Activated CD4-positive, alpha-beta T cell treated with anti-CD3 and anti-CD28 coated beads for 36 hours (primary cell): ENCODE measurements at regions of chr14 and their contacts with region 1.

Region 1: GRCh38 chr14:67359775-67360648 is at the starts of genes ATP6V1D and EIF2S1:
- DNase-seq: peak; percentile 100
- ATAC-seq: peak; percentile 95
- H3K4me3 Mint-ChIP-seq: peak within 1 kb of the TSS; percentile 98
- H3K27ac Mint-ChIP-seq: peak within 1 kb of the TSS; percentile 98
- H3K4me1 Mint-ChIP-seq: peaks cover 59% of the 10 kb centered on the region
- H3K27me3 Mint-ChIP-seq: no peaks in the 10 kb centered on the region
- total RNA-seq, gene ATP6V1D: 23.3 to 26.7 TPM
- total RNA-seq, gene EIF2S1: 212 to 233 TPM

Region 2: GRCh38 chr14:66495218-66496098 is 864.6 kb before region 1 on chr14:
- CTCF ChIA-PET with region 1: no interaction called
- POLR2A ChIA-PET with region 1: no interaction called
- intact Hi-C with region 1: loop called in 1 of 2 experiments (anchors 2 kb)
- DNase-seq: peak; percentile 52
- ATAC-seq: peak; percentile 83
- H3K4me3 Mint-ChIP-seq: no peak overlapping the region
- H3K27ac Mint-ChIP-seq: no peak overlapping the region
- H3K4me1 Mint-ChIP-seq: peaks cover 19% of the 10 kb centered on the region
- H3K27me3 Mint-ChIP-seq: no peaks in the 10 kb centered on the region

Region 3: DNA sequence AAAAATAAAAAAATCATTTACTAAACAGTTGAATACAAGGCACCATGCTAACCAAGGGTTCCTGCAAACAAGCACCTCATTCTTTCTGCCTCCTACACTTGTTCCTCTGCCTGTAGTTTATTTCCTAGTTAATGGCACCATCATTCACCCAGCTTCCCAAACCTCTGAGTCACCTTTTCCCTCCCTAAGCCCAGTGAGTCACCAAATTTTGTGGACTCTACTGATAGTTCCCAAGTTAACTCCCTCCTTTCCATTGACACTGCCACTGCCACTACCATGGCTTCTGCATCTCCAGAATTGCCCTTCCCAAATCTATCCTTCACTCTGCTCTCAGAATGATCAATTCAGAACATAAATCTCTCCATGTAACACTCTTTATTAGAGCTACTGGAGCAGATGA is 172.8 kb before region 1 on chr14:
- CTCF ChIA-PET with region 1: no interaction called
- POLR2A ChIA-PET with region 1: no interaction called
- intact Hi-C with region 1: loop called in 1 of 2 experiments (anchors 5 kb)
- DNase-seq: no peak
- ATAC-seq: no peak
- H3K4me3 Mint-ChIP-seq: no peak overlapping the region
- H3K27ac Mint-ChIP-seq: no peak overlapping the region
- H3K4me1 Mint-ChIP-seq: peaks cover 20% of the 10 kb centered on the region
- H3K27me3 Mint-ChIP-seq: no peaks in the 10 kb centered on the region

Region 4: GRCh38 chr14:67373347-67373746 is 13.3 kb after region 1 on chr14:
- CTCF ChIA-PET with region 1: interaction called, 19 read pairs
- POLR2A ChIA-PET with region 1: no interaction called
- intact Hi-C with region 1: loop called in 1 of 2 experiments (anchors 1 kb)
- DNase-seq: peak; percentile 34
- ATAC-seq: peak; percentile 94
- H3K4me3 Mint-ChIP-seq: no peak overlapping the region
- H3K27ac Mint-ChIP-seq: peak overlapping the region; percentile 88
- H3K4me1 Mint-ChIP-seq: peaks cover 53% of the 10 kb centered on the region
- H3K27me3 Mint-ChIP-seq: no peaks in the 10 kb centered on the region

Region 5: GRCh38 chr14:67619446-67620216 is 259.6 kb after region 1 on chr14 and contains the start of gene ARG2:
- CTCF ChIA-PET with region 1: interaction called, 3 read pairs
- POLR2A ChIA-PET with region 1: no interaction called
- intact Hi-C with region 1: loop called in 1 of 2 experiments (anchors 1 kb)
- DNase-seq: peak; percentile 99
- ATAC-seq: peak; percentile 88
- H3K4me3 Mint-ChIP-seq: peak within 1 kb of the TSS; percentile 77
- H3K27ac Mint-ChIP-seq: peak within 1 kb of the TSS; percentile 73
- H3K4me1 Mint-ChIP-seq: peaks cover 31% of the 10 kb centered on the region
- H3K27me3 Mint-ChIP-seq: peaks cover 8% of the 10 kb centered on the region
- total RNA-seq, gene ARG2: 11.9 TPM

Region 6: DNA sequence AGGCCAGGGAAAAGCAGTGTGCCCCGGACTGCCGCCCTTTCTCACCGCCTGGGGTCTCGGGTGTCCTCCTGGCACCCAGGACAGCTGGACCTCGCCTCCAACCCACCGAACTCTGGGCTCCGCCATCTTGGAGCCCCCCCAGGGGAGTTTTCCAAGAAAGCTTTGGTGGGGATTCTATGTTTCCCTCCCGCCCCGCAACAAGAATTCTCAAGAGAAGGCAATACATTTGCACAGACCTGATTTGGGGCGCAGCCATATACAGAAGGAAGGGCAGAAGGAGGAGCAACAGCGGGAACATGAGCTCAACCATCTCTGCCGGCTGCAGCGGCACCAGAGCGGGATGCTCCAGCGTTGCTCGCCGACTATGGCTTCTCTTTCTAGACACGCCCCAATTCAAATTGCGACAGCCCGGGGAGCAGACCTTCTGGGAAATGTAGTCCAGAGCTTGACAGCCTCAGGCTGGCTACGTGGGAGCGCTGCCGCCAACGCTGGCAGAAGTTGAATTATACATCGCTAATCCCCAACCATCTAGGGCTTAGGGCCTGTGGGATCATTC is 335.5 kb after region 1 on chr14 and contains the start of gene RDH11:
- CTCF ChIA-PET with region 1: no interaction called
- POLR2A ChIA-PET with region 1: interaction called, 3 read pairs
- intact Hi-C with region 1: loop called in 1 of 2 experiments (anchors 1 kb)
- DNase-seq: peak; percentile 92
- ATAC-seq: peak; percentile 88
- H3K4me3 Mint-ChIP-seq: peak within 1 kb of the TSS; percentile 91
- H3K27ac Mint-ChIP-seq: peak within 1 kb of the TSS; percentile 98
- H3K4me1 Mint-ChIP-seq: peaks cover 21% of the 10 kb centered on the region
- H3K27me3 Mint-ChIP-seq: no peaks in the 10 kb centered on the region
- total RNA-seq, gene RDH11: 72.0 to 75.6 TPM